OCI-LY7 (cell line): ENCODE measurements at regions of chrX and their contacts with region 1.

Region 1: GRCh38 chrX:107454302-107454701 is 4.8 kb downstream of the FRMPD3 start:
- DNase-seq: no peak
- H3K4me3 ChIP-seq: peak overlapping the region; percentile 23
- H3K27ac ChIP-seq: no peak overlapping the region
- H3K4me1 ChIP-seq: peaks cover 50% of the 10 kb centered on the region
- CTCF ChIP-seq: no peak

Region 2: DNA sequence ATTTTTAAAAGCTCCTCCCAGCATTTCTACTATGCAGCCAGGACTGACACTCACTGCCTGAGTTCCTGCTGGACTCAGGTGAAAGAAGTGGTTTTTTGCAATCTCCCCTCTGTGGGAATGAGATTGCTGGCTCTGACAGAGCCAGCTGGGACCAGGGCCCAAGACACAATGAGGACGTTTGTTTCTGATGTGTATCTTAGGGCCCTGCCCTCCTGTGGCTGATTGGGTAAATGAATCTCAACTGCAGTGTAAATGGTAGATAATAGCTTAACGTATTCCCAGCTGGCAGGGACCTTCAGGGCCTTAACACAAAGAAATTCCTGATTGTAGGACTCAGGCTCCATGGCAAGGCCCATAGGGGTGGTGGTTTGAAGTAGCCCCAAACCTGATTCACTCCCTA is 88.2 kb after region 1 on chrX:
- CTCF ChIA-PET with region 1: no interaction called
- POLR2A ChIA-PET with region 1: no interaction called
- intact Hi-C with region 1: loop called (anchors 5 kb)
- DNase-seq: peak; percentile 27
- H3K4me3 ChIP-seq: no peak overlapping the region
- H3K27ac ChIP-seq: no peak overlapping the region
- H3K4me1 ChIP-seq: peaks cover 12% of the 10 kb centered on the region
- CTCF ChIP-seq: peak; percentile 52